Naive thymus-derived CD4-positive, alpha-beta T cell (primary cell): ENCODE measurements at regions of chr9 and their contacts with region 1.

Region 1: DNA sequence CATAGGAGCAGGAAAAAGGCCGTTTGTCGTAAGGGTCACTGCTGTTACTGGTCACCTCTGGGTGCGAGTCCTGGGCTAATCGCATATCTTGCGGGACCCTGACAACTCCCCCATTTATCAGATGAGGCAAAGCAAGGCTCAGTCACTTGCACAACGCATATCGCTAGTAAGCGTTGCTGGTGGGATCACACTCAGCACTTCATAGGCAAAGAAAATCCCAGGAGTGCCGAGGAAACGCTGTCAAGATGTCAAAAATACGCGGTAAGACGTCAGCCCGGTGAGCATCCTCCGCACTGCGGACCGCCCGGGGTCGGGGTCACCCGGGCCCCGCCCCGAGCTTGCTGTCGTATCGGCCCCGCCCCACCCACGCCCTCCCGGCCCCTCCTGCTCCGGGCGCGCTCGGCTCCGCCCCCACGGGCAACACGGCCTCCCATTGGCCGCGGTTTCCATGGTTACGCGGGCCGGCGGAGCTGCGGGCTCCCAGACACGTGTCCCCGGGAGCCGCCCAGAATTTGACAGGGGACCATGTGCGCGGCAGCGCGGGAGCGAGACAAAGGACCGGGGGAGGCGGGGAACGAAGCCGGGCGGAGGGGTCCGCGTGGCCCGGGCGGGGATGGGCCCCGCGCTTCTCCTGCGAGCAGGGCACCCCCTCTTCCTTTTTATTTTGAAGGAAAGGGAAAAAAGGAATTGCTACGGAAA is 80.2 kb upstream of the IER5L start:
- DNase-seq: peak; percentile 81 to 91 (median 86)
- ATAC-seq: peak; percentile 97
- H3K4me3 ChIP-seq: peak overlapping the region; percentile 43
- H3K4me3 Mint-ChIP-seq: peak overlapping the region; percentile 45 to 91 (median 83)
- H3K27ac ChIP-seq: no peak overlapping the region
- H3K27ac Mint-ChIP-seq: peak overlapping the region in 8 of 9 donors; percentile 15 to 89 (median 62)
- H3K4me1 ChIP-seq: peaks cover 12 to 18% of the 10 kb centered on the region in 2 donors
- H3K4me1 Mint-ChIP-seq: peaks cover 16 to 48% (median 41%) of the 10 kb centered on the region in 7 donors
- H3K27me3 ChIP-seq: no peaks in the 10 kb centered on the region
- H3K27me3 Mint-ChIP-seq: peaks cover 0 to 48% (median 0%) of the 10 kb centered on the region in 5 donors

Region 2: GRCh38 chr9:128552153-128552743 is 706.0 kb before region 1 on chr9 and contains the start of gene SPTAN1:
- CTCF ChIA-PET with region 1: no interaction called
- POLR2A ChIA-PET with region 1: no interaction called
- intact Hi-C with region 1: no loop called
- DNase-seq: peak; percentile 92 to 98 (median 96)
- ATAC-seq: peak; percentile 94
- H3K4me3 ChIP-seq: peak within 1 kb of the TSS; percentile 84
- H3K4me3 Mint-ChIP-seq: peak within 1 kb of the TSS in 7 of 10 donors; percentile 85 to 94 (median 92)
- H3K27ac ChIP-seq: peak within 1 kb of the TSS; percentile 94
- H3K27ac Mint-ChIP-seq: peak within 1 kb of the TSS; percentile 92 to 98 (median 97)
- H3K4me1 ChIP-seq: peaks cover 44 to 45% of the 10 kb centered on the region in 2 donors
- H3K4me1 Mint-ChIP-seq: peaks cover 15 to 38% (median 34%) of the 10 kb centered on the region in 7 donors
- H3K27me3 ChIP-seq: no peaks in the 10 kb centered on the region
- H3K27me3 Mint-ChIP-seq: no peaks in the 10 kb centered on the region
- total RNA-seq, gene SPTAN1: 336 to 433 (median 375) TPM

Region 3: DNA sequence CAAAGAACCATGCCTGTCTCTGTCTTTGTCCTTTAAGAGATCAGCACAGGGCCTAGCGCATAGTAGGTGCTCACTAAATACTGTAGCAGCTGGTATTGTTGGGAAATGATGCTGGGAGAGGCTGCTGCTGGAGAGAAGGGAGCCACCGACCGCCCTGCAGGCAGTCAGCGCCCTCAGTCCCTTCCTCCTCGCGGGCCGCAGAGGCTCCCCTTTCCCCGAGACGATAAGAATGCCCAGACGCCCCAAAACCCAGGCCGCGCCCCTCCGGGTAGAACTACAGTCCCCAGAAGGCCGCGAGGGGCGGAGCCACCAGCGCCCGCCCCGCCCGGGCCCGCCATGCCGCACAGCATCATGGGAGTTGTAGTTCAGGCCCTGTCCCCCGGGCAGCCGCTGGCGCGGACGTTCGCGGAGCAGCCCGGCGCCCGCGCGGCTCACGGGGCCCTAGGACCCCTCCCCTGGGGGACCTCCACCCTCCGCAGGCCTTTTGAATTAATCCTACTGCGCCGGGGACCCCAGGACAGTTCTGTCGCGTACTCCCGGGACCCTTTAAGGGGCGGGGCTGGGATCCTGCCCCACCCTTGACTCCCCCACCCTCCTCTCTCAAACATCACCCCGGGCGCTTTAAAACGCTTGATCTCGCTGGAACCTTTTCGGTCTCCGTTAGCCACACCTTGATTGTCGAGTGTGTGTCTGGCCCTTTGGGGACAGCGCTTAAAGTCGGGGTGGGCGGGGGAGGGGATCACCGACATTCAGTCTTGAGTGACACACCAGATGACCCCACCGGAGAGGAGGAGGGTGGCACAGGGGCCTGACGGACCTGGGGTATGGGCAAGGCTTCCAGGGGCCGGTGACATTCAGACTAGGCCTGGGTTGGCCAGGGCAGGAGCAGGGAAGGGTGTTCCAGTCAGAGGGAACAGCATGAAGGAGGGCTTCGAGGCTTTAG is 55.4 kb before region 1 on chr9:
- CTCF ChIA-PET with region 1: no interaction called
- POLR2A ChIA-PET with region 1: no interaction called
- intact Hi-C with region 1: loop called (anchors 2 kb)
- DNase-seq: peak; percentile 84 to 96 (median 92)
- ATAC-seq: peak; percentile 99
- H3K4me3 ChIP-seq: peak overlapping the region; percentile 77
- H3K4me3 Mint-ChIP-seq: peak overlapping the region; percentile 64 to 82 (median 74)
- H3K27ac ChIP-seq: peak overlapping the region; percentile 83
- H3K27ac Mint-ChIP-seq: peak overlapping the region in 8 of 9 donors; percentile 64 to 91 (median 84)
- H3K4me1 ChIP-seq: peaks cover 21 to 23% of the 10 kb centered on the region in 2 donors
- H3K4me1 Mint-ChIP-seq: peaks cover 13 to 26% (median 20%) of the 10 kb centered on the region in 7 donors
- H3K27me3 ChIP-seq: no peaks in the 10 kb centered on the region
- H3K27me3 Mint-ChIP-seq: peaks cover 0 to 11% (median 0%) of the 10 kb centered on the region in 5 donors

Region 4: DNA sequence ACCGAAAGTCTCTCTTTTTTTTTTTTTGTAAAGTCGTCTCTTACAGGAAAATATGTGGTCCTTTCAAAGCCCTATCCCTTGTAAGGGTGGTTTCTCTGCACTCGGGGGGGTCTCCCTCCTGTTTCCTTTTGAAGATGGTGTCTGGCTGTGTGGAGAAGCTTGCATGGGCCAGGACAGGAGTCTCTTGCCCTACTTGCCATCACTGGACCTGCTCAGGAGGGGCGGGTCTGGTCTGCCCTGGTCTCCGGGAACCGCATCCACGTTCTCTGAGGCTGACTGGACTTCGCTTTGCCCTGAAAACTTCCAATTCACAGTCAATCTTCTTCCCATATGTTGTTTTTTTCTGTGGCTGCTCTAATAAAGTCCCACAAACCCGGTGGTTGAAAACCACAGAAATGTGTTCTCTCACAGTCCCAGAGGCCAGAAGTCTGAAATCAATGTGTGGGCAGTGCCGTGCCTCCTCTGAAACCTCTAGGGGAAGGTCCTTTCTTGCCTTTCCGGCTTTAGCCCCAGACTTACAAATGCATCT is 12.7 kb after region 1 on chr9:
- CTCF ChIA-PET with region 1: no interaction called
- POLR2A ChIA-PET with region 1: no interaction called
- intact Hi-C with region 1: loop called in 1 of 2 experiments (anchors 1 kb)
- DNase-seq: peak in 4 of 9 donors; percentile 6 to 20 (median 10)
- ATAC-seq: peak; percentile 42
- H3K4me3 ChIP-seq: peak overlapping the region; percentile 28
- H3K4me3 Mint-ChIP-seq: peak overlapping the region; percentile 41 to 81 (median 72)
- H3K27ac ChIP-seq: no peak overlapping the region
- H3K27ac Mint-ChIP-seq: peak overlapping the region; percentile 33 to 89 (median 82)
- H3K4me1 ChIP-seq: peaks cover 20 to 22% of the 10 kb centered on the region in 2 donors
- H3K4me1 Mint-ChIP-seq: peaks cover 18 to 37% (median 27%) of the 10 kb centered on the region in 7 donors
- H3K27me3 ChIP-seq: peaks cover 0 to 2% of the 10 kb centered on the region in 2 donors
- H3K27me3 Mint-ChIP-seq: peaks cover 0 to 20% (median 0%) of the 10 kb centered on the region in 5 donors